ENCODE measurements at regions of chr5 and their contacts with region 1.

Region 1: DNA sequence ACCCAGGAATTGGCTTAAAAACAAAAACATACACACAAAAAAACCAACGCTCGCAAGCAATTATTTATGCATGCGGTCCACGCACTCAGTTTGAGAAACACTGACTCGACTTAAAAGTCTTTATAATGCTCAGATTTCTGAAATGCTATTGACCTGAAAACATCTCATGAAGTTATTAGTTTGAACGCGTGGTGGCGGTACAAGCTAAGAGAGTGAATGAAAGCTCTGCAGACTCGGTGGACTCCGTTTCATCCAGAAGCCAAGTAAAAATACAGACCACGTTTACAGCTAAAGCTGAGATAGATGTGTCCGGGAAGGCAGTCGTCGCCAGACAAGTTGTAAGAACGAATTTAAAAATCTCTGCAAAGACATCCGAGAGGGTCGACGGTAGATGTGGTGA is at the start of gene PCDHB6:
- DNase-seq: peak; percentile 30

Region 2: GRCh38 chr5:141094481-141095262 is 55.1 kb before region 1 on chr5 and contains the start of gene PCDHB2:
- CTCF ChIA-PET with region 1: interaction called, 11 read pairs
- POLR2A ChIA-PET with region 1: no interaction called
- DNase-seq: peak; percentile 35

Region 3: GRCh38 chr5:141192110-141192732 is 42.4 kb after region 1 on chr5 and contains the start of gene PCDHB10:
- CTCF ChIA-PET with region 1: no interaction called
- POLR2A ChIA-PET with region 1: no interaction called
- DNase-seq: peak; percentile 17

Measured in HEK293T (cell line).